PC-9 (cell line): ENCODE measurements at regions of chr7 and their contacts with region 1.

Region 1: DNA sequence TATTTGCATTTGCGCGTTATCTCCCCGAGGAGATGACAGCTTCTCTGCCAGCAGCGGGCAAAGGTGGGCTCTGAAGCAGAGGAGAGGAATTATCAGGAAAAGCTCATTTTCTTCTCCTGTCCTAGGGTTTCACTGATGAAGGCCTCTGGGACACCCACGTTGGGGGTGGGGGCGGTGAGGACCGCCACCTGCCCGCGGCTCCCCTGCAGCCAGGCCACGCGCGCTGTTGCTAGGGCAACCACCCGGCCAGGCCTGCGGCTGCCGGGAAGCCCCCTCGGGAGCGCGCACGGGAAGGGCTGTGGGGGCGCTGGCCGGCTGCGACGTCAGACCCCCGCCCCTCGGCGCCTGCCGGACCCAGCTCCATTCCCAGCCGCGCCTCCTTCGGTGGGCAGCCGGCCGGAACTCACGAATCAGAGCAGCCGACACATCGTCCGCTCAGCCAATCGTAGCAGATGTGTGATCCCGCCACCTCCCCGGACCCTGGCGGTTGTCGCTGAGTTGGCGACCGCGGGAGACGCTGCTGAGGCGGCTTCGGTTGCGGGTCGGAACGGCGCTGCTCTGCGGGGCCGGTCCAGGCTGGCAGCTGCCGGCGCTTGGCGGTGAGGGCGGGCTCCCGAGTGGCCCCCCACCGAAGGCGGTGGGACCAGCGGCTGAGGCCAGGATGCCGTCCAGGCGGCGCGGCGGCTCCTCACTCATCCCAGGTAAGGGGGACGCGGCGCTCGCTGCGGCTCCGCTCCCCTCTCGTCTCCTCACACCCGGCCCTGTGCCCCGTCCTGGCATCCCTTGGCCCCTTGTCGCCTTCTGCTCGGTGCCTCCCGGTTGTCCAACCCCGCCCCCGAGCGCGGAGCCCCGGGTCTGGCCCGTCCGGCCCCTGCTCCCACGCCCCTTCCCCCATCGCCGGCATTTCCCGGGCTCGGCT is at the start of gene TPST1:
- DNase-seq: peak; percentile 69 to 93
- H3K4me3 ChIP-seq: peak within 1 kb of the TSS; percentile 94
- H3K27ac ChIP-seq: no peak within 1 kb of the TSS
- H3K4me1 ChIP-seq: peaks cover 5% of the 10 kb centered on the region; the same call in 1 of the 2 replicates
- H3K27me3 ChIP-seq: no peaks in the 10 kb centered on the region
- CTCF ChIP-seq: peak; percentile 58; the same call in 1 of the 2 replicates
- total RNA-seq, gene TPST1: 11.0 and 14.9 TPM in 2 replicates

Region 2: GRCh38 chr7:66150471-66150870 is 54.6 kb before region 1 on chr7:
- CTCF ChIA-PET with region 1: no interaction called
- POLR2A ChIA-PET with region 1: no interaction called
- intact Hi-C with region 1: loop called (anchors 2 kb)
- DNase-seq: no peak
- H3K4me3 ChIP-seq: no peak overlapping the region
- H3K27ac ChIP-seq: no peak overlapping the region
- H3K4me1 ChIP-seq: peaks cover 15% of the 10 kb centered on the region
- H3K27me3 ChIP-seq: no peaks in the 10 kb centered on the region
- CTCF ChIP-seq: no peak

Region 3: GRCh38 chr7:66413379-66414114 is 208.5 kb after region 1 on chr7:
- CTCF ChIA-PET with region 1: no interaction called
- POLR2A ChIA-PET with region 1: no interaction called
- intact Hi-C with region 1: loop called (anchors 5 kb)
- DNase-seq: peak; percentile 66 to 67
- H3K4me3 ChIP-seq: peak overlapping the region; percentile 55
- H3K27ac ChIP-seq: no peak overlapping the region
- H3K4me1 ChIP-seq: peaks cover 10% of the 10 kb centered on the region
- H3K27me3 ChIP-seq: no peaks in the 10 kb centered on the region
- CTCF ChIP-seq: peak; percentile 52; the same call in 1 of the 2 replicates